ENCODE measurements at regions of chr2 and their contacts with region 1.

Region 1: DNA sequence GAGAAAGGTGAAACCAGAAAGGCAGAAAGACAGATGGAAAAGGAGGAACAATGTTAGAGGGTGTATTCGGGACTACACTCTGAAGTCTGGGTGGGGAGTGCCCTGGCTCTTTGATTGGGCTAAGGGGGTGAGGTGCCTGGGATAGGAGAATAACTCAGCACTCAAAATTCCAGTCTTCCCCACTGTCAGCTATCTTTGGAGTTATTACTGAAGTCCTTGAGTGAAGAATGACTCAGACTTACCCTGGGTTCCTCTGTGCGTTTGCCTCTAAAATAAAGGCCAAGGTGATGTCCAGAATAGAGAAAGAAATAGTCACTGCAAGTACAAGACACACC is 151.8 kb upstream of the SERPINE2 start:
- DNase-seq: peak; percentile 12
- ATAC-seq: no peak
- H3K4me3 ChIP-seq: no peak overlapping the region
- H3K27ac ChIP-seq: no peak overlapping the region
- H3K4me1 ChIP-seq: no peaks in the 10 kb centered on the region
- H3K27me3 ChIP-seq: no peaks in the 10 kb centered on the region
- CTCF ChIP-seq: no peak

Region 2: GRCh38 chr2:224046752-224047151 is 144.2 kb before region 1 on chr2:
- CTCF ChIA-PET with region 1: no interaction called
- POLR2A ChIA-PET with region 1: no interaction called
- intact Hi-C with region 1: no loop called
- DNase-seq: no peak
- ATAC-seq: no peak
- H3K4me3 ChIP-seq: no peak overlapping the region
- H3K27ac ChIP-seq: no peak overlapping the region
- H3K4me1 ChIP-seq: no peaks in the 10 kb centered on the region
- H3K27me3 ChIP-seq: no peaks in the 10 kb centered on the region
- CTCF ChIP-seq: no peak

Region 3: DNA sequence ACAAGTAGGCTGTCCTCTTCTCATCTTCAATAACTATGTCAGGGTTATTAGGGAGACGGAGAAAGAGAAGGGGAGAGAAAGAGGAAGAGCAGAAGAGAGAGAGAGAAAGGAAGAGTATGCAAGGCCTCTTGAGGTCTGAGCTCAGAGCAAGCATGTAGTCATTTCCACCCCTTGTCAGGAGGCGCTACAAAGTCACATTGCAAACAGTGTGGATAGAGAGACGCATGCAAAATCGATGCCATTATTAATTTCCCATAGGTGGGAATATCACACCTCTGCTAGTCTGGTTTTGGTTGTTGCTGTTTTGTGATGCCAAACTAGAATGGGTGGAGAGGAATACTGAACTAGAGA is 127.6 kb before region 1 on chr2:
- CTCF ChIA-PET with region 1: no interaction called
- POLR2A ChIA-PET with region 1: interaction called, 22 read pairs
- intact Hi-C with region 1: no loop called
- DNase-seq: no peak
- ATAC-seq: no peak
- H3K4me3 ChIP-seq: no peak overlapping the region
- H3K27ac ChIP-seq: no peak overlapping the region
- H3K4me1 ChIP-seq: no peaks in the 10 kb centered on the region
- H3K27me3 ChIP-seq: no peaks in the 10 kb centered on the region
- CTCF ChIP-seq: no peak

Region 4: DNA sequence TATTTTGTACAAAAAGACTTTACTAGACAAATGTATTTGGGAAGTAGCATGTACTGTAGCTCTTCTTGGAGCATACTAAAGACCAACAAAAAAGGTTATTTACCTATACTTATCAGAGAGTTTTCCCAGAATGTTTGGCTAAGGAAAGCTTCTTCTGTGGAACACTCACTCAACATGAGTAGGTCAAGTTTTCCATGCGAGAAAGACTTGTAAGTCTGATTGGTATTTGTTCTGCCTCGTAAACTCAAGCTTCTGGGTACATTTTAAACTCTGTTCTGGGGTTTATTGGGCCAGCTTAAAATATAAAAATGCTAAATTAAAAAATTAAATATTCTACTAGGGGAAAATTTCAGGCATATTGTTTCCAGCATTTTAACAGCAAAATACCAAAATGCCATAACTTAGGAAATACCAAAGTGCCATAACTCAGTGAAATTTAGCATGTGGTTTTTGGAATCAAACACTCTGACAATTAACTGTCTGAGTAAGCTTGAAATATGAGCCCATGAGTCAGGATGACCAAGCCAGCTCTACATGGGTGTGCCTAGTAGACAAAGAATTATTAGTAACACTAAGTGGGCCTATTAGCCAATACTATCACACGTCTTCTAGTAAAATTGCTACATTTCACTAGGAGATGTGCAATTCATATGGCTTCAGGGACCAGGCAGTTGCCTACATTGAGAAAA is 104.5 kb before region 1 on chr2:
- CTCF ChIA-PET with region 1: no interaction called
- POLR2A ChIA-PET with region 1: no interaction called
- intact Hi-C with region 1: no loop called
- DNase-seq: peak; percentile 96
- ATAC-seq: peak; percentile 88
- H3K4me3 ChIP-seq: peak overlapping the region; percentile 55
- H3K27ac ChIP-seq: peak overlapping the region; percentile 97
- H3K4me1 ChIP-seq: peaks cover 35% of the 10 kb centered on the region
- H3K27me3 ChIP-seq: no peaks in the 10 kb centered on the region
- CTCF ChIP-seq: no peak

Measured in PC-3 (cell line).